Transverse colon (tissue), 4 donors: ENCODE measurements at regions of chr12 and their contacts with region 1.

Region 1: GRCh38 chr12:110684312-110684836 is 4.5 kb downstream of the HVCN1 start:
- DNase-seq: no peak
- H3K4me3 ChIP-seq: no peak overlapping the region
- H3K27ac ChIP-seq: no peak overlapping the region
- H3K4me1 ChIP-seq: peaks cover 5 to 14% (median 11%) of the 10 kb centered on the region in 4 donors
- H3K27me3 ChIP-seq: peaks cover 13% of the 10 kb centered on the region
- CTCF ChIP-seq: no peak
- EP300 ChIP-seq: no peak
- POLR2A ChIP-seq: no peak

Region 2: GRCh38 chr12:110619534-110619953 is 64.8 kb before region 1 on chr12:
- in situ Hi-C with region 1: loop called in 1 of 4 experiments (anchors 5 kb)
- intact Hi-C with region 1: no loop called
- DNase-seq: no peak
- H3K4me3 ChIP-seq: no peak overlapping the region
- H3K27ac ChIP-seq: no peak overlapping the region
- H3K4me1 ChIP-seq: peaks cover 1 to 4% (median 3%) of the 10 kb centered on the region in 4 donors
- H3K27me3 ChIP-seq: no peaks in the 10 kb centered on the region
- CTCF ChIP-seq: no peak
- EP300 ChIP-seq: no peak
- POLR2A ChIP-seq: no peak

Region 3: GRCh38 chr12:110639336-110640141 is 44.8 kb before region 1 on chr12:
- in situ Hi-C with region 1: no loop called
- intact Hi-C with region 1: no loop called
- DNase-seq: no peak
- H3K4me3 ChIP-seq: no peak overlapping the region
- H3K27ac ChIP-seq: peak overlapping the region in 3 of 4 donors; percentile 29 to 57 (median 44)
- H3K4me1 ChIP-seq: peaks cover 0 to 8% (median 0%) of the 10 kb centered on the region in 4 donors
- H3K27me3 ChIP-seq: no peaks in the 10 kb centered on the region
- CTCF ChIP-seq: no peak
- EP300 ChIP-seq: no peak
- POLR2A ChIP-seq: no peak

Region 4: GRCh38 chr12:110896559-110896958 is 212.2 kb after region 1 on chr12:
- in situ Hi-C with region 1: no loop called
- intact Hi-C with region 1: no loop called
- DNase-seq: no peak
- H3K4me3 ChIP-seq: no peak overlapping the region
- H3K27ac ChIP-seq: no peak overlapping the region
- H3K4me1 ChIP-seq: peaks cover 0 to 7% (median 0%) of the 10 kb centered on the region in 4 donors
- H3K27me3 ChIP-seq: peaks cover 12% of the 10 kb centered on the region
- CTCF ChIP-seq: no peak
- EP300 ChIP-seq: no peak
- POLR2A ChIP-seq: no peak